Dorsolateral prefrontal cortex (tissue), 120 donors: ENCODE measurements at regions of chr2 and their contacts with region 1.

Region 1: DNA sequence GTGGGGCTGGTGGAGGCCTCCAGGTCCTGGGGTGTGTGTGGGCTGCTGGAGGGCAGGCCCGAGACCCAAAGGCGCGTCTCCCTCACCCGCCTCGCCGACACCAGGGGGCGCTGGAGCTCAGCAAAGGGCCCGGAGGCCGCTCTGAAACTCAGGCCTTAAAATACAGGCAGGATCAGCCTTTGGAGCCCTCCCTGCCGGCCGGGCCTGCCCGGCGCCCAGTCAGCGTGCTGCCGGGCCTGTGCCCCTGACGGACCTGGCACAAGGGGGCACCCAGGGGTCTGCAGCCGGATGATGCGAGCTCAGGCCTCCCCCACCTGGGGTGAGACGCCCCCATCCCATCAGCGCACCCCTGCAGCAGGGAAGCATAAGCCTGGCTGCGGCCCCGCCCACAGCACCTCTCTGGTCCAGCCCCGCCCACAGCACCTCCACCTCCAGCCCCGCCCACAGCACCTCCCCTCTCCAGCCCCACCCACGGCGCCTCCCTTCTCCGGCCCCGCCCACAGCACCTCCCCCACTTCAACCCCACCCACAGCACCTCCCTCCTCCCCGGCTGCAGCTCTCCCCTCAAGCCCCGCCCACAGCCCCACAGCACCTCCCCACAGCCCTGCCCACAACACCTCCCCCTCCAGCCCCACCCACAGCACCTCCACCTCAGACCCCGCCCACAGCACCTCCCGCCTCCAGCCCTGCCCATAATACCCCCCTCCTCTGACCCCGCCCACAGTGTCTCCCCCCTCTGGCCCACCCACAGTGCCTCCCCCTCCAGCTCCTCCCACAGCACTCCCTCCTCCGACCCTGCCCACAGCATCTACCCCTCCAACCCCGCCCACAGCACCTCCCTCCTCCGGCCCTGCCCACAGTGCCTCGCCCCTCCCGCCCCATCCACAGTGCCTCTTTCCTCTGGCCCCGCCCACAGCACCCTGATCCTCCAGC is 92.8 kb upstream of the OTOS start:
- DNase-seq: peak; percentile 65 to 87 (median 79)
- H3K4me3 ChIP-seq: peak overlapping the region in 42 of 59 donors; percentile 4 to 54 (median 37)
- H3K27ac ChIP-seq: peak overlapping the region in 26 of 59 donors; percentile 6 to 82 (median 45)
- H3K27me3 ChIP-seq: no peaks in the 10 kb centered on the region
- CTCF ChIP-seq: peak; percentile 77 to 98 (median 93)

Region 2: GRCh38 chr2:240160291-240161086 is 72.7 kb before region 1 on chr2:
- intact Hi-C with region 1: no loop called
- DNase-seq: peak in 1 of 10 donors; percentile 42
- H3K4me3 ChIP-seq: no peak overlapping the region
- H3K27ac ChIP-seq: no peak overlapping the region
- H3K27me3 ChIP-seq: no peaks in the 10 kb centered on the region
- CTCF ChIP-seq: no peak

Region 3: GRCh38 chr2:240277073-240277806 is 44.0 kb after region 1 on chr2:
- intact Hi-C with region 1: no loop called
- DNase-seq: peak in 1 of 10 donors; percentile 19
- H3K4me3 ChIP-seq: no peak overlapping the region
- H3K27ac ChIP-seq: no peak overlapping the region
- H3K27me3 ChIP-seq: peaks cover 0 to 12% (median 0%) of the 10 kb centered on the region in 45 donors
- CTCF ChIP-seq: no peak

Region 4: DNA sequence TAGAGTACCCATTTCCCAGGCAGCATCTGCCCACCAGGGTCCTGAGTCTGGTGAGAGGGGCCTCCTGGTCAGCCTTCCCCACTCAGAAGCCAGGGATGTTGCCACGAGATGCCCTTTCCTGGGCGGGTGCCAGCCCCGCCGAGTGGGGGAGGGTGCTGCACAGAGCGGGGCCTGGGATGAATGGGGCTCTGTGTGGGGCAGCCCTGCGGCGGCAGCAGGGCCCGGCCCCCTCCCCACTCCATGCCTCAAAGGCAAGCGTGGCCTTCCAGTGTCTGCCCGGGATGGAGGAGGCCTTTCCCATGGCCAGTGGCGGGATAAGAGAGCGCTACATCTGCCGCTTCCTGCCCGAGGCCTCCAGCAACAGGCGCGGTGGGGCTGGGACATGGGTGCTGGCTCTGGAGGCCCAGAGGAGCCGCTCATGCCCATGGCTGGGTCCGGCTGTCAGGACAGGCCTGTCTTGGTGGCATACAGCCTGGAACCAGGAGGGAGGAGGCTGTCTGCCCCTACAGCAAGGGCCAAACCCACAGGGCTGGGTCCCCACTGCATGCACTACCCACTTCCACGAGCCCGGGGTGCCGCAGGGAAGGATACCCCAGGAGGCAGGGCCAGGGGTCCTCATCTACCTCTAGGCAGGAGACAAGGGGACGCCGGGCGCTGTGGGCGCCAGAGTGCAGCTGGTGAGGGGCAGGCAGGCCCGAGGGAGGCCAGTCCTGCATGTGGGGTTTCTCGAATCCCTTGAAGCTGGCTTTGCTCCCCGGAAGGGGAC is 107.0 kb after region 1 on chr2:
- intact Hi-C with region 1: loop called (anchors 5 kb)
- DNase-seq: peak in 9 of 10 donors; percentile 79 to 88 (median 82)
- H3K4me3 ChIP-seq: peak overlapping the region in 5 of 59 donors; percentile 1 to 32 (median 5)
- H3K27ac ChIP-seq: peak overlapping the region in 58 of 59 donors; percentile 5 to 95 (median 80)
- H3K27me3 ChIP-seq: peaks cover 0 to 4% (median 0%) of the 10 kb centered on the region in 45 donors
- CTCF ChIP-seq: peak in 9 of 56 donors; percentile 11 to 23 (median 15)

Region 5: DNA sequence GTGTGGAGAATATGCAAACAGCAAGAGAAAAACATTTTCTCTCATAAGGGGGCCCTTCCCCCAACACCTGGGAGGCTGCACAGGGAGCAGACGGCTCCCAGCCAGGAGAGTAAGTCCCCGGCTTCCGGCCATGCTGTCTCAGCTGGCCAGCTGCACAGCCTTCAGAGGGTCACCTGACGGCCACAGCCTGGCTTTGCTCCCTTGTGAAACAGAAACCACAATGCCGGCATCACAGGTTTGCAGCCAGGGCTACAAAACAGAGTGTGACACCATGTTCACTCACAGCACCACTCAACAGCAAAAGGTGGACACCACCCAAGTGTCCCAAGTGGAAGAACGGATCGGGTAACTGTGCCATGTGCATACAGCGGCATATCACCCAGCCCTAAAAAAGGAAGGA is 115.3 kb after region 1 on chr2:
- intact Hi-C with region 1: loop called (anchors 5 kb)
- DNase-seq: peak in 3 of 10 donors; percentile 15 to 21 (median 20)
- H3K4me3 ChIP-seq: no peak overlapping the region
- H3K27ac ChIP-seq: no peak overlapping the region
- H3K27me3 ChIP-seq: peaks cover 0 to 3% (median 0%) of the 10 kb centered on the region in 45 donors
- CTCF ChIP-seq: no peak